Left ventricle myocardium superior (tissue), 1 donor: ENCODE measurements at regions of chr7 and their contacts with region 1.

Region 1: DNA sequence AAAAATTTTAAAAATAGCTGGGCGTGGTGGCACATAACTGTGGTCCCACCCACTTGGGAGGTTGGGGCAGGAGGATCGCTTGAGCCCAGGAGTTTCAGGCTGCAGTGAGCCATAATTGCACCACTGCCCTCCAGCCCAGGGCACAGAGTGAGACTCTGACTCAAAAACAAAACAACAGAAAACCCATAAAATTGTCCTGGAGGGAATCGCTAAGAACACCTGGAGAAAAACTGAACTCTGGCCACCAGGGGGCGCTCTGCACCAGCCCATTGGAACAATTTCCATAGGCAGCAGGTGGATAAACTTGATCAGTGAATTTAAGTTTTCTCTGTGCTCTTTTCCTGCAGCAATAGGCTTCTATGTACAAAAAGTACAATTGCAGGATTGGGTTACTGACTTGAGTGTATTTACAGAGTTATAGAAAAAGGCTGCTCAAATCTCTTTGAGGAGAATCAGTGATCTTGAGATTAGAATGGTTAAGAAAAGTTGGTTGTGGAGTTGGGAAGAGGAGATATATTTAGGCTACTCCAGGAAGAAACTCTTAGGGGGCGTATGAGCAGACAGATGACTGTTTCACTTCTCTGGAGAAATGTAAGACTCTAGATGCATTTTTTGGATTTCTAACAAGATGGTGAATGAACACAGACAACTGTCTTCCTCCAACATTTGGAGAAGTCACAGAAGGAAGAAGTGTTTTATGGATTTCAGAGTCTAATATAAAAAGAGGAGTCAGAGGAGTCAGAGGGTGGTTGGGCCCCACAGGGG is 274.9 kb upstream of the GALNT17 start:
- DNase-seq: peak; percentile 79
- ATAC-seq: peak; percentile 37

Region 2: GRCh38 chr7:71733107-71733870 is 876.2 kb after region 1 on chr7:
- intact Hi-C with region 1: loop called (anchors 5 kb)
- DNase-seq: peak; percentile 90
- ATAC-seq: peak; percentile 85